ENCODE measurements at regions of chr2 and their contacts with region 1.

Region 1: DNA sequence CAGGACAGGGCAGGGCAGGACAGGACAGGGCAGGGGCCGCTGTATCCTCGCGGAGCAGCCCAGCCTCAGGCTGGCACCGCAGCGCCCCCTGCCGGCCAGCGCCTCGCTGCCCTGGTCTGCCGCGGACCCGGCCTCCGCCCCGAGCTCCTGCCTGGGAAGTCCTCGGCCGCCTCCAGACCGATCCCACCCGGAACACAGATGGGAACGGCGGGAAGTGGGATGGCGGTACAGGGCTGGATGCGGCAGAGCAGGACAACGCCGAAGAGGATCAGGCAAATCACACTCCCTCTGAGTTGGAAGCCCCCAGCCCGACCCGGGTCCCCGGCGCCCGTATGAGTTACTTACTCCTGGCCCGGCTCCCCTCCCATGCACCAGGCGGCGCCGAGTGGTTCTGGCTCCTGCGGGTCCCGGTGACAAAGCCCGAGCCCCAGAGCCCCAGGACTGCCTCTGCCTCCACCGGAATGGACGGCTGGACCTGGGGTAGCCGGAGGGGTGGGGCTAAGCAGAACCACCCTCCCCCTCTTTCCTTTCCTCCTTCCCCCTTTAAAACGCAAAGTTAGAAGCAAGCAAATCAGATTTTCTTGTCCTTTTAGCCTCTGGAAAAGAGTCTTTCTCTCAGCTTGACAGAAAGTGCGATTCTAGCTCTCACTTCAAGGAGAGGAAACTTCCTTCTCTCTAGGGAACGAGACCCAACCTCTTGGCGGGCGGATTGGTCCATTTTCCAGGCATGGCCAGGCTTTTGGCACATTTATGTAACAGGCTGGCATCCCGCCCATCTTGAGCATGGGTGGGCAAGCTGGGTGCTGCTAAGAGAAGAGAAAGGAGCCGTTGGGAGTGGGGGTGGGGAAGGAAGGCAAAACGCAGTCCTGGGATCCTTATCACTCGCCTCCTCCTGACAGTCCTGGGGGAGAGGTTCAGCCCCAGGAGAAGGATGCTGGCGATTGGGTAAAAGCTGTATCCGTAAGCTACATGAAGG is at the start of gene TP53I3:
- DNase-seq: peak; percentile 88 to 95 (median 91)
- ATAC-seq: peak; percentile 94 to 97 (median 96)
- H3K4me3 ChIP-seq: peak within 1 kb of the TSS; percentile 34 to 81 (median 69)
- H3K27ac ChIP-seq: peak within 1 kb of the TSS; percentile 85 to 98 (median 92)
- H3K4me1 ChIP-seq: peaks cover 0 to 27% (median 13%) of the 10 kb centered on the region in 12 donors
- H3K27me3 ChIP-seq: no peaks in the 10 kb centered on the region
- CTCF ChIP-seq: peak; percentile 93 to 99 (median 96)
- POLR2A ChIP-seq: peak in 1 of 2 donors; percentile 49
- total RNA-seq, gene TP53I3: 4.7 to 21.8 (median 9.6) TPM

Region 2: GRCh38 chr2:23835988-23836387 is 248.7 kb before region 1 on chr2:
- intact Hi-C with region 1: loop called in 1 of 10 experiments (anchors 10 kb)
- DNase-seq: no peak
- ATAC-seq: peak in 1 of 4 donors; percentile 39
- H3K4me3 ChIP-seq: no peak overlapping the region
- H3K27ac ChIP-seq: no peak overlapping the region
- H3K4me1 ChIP-seq: no peaks in the 10 kb centered on the region
- H3K27me3 ChIP-seq: no peaks in the 10 kb centered on the region
- CTCF ChIP-seq: no peak
- POLR2A ChIP-seq: no peak

Region 3: GRCh38 chr2:23934259-23934658 is 150.4 kb before region 1 on chr2:
- intact Hi-C with region 1: loop called in 7 of 10 experiments (anchors 5 to 10 kb)
- DNase-seq: no peak
- ATAC-seq: no peak
- H3K4me3 ChIP-seq: no peak overlapping the region
- H3K27ac ChIP-seq: no peak overlapping the region
- H3K4me1 ChIP-seq: peaks cover 0 to 6% (median 2%) of the 10 kb centered on the region in 12 donors
- H3K27me3 ChIP-seq: no peaks in the 10 kb centered on the region
- CTCF ChIP-seq: no peak
- POLR2A ChIP-seq: no peak

Region 4: GRCh38 chr2:24046930-24047702 is 37.6 kb before region 1 on chr2 and contains the start of gene WDCP:
- intact Hi-C with region 1: loop called in 1 of 10 experiments (anchors 5 kb)
- DNase-seq: peak; percentile 93 to 97 (median 96)
- ATAC-seq: peak; percentile 99 to 100 (median 100)
- H3K4me3 ChIP-seq: peak within 1 kb of the TSS; percentile 52 to 87 (median 73)
- H3K27ac ChIP-seq: peak within 1 kb of the TSS in 10 of 12 donors; percentile 33 to 79 (median 68)
- H3K4me1 ChIP-seq: peaks cover 0 to 39% (median 19%) of the 10 kb centered on the region in 12 donors
- H3K27me3 ChIP-seq: no peaks in the 10 kb centered on the region
- CTCF ChIP-seq: no peak
- POLR2A ChIP-seq: peak in 1 of 2 donors; percentile 86
- total RNA-seq, gene WDCP: 4.9 to 9.8 (median 6.1) TPM

Measured in heart left ventricle (tissue), 16 donors.